ENCODE measurements at regions of chr5 and their contacts with region 1.

Region 1: DNA sequence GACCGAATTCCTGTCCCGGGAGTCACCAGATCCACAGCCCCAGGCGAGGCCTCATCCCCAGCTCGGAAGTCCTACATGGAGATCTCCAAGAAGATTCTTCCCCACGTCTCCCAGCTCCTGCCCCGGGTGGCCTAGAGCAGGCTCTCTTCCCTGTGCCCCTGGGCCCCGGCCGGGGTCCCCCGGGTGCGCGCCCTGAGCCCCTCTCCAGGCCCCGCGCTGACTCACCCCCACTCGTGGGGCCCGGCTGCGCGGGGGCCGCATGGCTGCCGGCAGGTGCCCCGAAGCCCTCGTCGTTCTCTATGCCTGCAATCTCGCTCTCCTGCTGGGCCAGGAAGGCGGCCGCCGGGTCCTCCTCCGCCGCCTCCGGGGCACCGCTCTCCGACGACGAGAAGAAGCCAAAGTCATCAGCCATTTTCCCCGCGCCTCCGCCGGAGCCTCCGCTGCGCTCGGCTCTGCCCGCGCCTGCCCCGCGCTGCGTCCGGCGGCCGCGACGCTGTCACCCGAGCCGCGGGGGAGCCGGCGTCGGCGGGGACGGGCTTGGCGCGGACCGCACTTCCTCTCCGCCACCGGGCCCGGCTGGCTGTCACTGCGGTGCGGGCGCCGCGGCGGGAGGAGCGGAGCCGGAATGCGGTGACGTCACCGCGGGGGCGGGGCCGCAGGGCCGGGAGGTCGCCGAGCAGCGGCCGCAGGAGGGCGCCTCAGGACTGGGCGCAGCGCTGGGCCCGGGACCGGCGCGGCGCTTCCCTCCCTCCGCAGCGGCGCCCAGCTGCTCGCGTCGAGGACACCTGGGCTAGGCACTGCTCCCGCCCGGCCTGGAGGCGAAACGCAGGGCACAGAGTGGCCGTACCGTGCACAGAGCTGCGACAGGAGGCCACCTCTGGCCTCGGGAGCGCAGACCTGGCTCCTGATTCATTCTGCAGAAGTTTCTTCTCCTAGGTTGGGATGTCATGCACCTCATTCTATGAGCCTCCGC is at the start of gene CLTB:
- DNase-seq: peak; percentile 88 to 97 (median 93)
- H3K4me3 ChIP-seq: peak within 1 kb of the TSS; percentile 100
- H3K27ac ChIP-seq: peak within 1 kb of the TSS; percentile 86 to 89
- H3K4me1 ChIP-seq: peaks cover 8% of the 10 kb centered on the region
- H3K27me3 ChIP-seq: no peaks in the 10 kb centered on the region
- CTCF ChIP-seq: peak; percentile 52 to 97 (median 94)
- EP300 ChIP-seq: no peak
- POLR2A ChIP-seq: peak; percentile 93
- total RNA-seq, gene CLTB: 79.7 to 138 (median 115) TPM

Region 2: DNA sequence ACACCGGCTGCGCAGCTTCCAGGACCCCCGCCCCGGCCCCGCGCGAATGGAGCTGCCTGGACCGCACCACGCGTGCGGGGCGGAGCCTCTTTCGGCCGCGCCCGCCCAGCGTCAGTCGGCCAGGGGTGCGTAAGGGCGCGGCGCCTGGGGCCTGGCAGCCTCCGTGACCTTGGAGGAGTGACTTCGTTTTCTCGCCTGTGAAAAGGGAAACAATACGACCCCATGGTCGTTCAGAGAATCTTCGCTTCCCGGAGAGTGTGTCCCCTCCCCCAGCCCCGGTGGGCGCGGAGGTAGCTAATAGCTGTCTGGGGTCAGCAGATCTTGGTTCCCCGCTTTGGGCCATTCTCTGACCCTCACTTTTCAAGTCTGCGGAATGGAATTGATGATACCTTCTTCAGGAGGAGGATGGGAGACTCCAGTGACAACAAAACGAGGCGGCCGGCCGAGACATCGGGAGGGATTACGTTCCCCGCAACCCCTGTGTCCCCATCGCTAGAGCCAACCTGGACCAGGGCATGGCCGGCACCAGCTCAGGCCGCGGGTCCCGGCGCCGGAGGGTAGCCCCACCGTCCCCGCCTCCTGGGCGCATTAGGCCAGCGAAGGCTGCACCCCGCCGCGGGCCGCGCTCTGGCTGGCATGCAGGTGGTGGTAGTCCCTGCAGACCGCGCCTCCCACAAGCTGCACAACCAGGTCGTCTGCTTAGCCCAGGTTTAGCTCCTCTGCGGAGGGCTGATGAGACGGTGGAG is 127.4 kb after region 1 on chr5:
- intact Hi-C with region 1: loop called in 1 of 4 experiments (anchors 10 kb)
- DNase-seq: peak; percentile 68 to 87 (median 79)
- H3K4me3 ChIP-seq: peak overlapping the region; percentile 79
- H3K27ac ChIP-seq: peak overlapping the region; percentile 72 to 88
- H3K4me1 ChIP-seq: peaks cover 7% of the 10 kb centered on the region
- H3K27me3 ChIP-seq: no peaks in the 10 kb centered on the region
- CTCF ChIP-seq: no peak
- EP300 ChIP-seq: no peak
- POLR2A ChIP-seq: peak; percentile 26

Region 3: GRCh38 chr5:176647030-176647866 is 231.0 kb after region 1 on chr5 and contains the start of gene TSPAN17:
- intact Hi-C with region 1: loop called in 1 of 4 experiments (anchors 5 kb)
- DNase-seq: peak; percentile 100
- H3K4me3 ChIP-seq: peak within 1 kb of the TSS; percentile 68
- H3K27ac ChIP-seq: peak within 1 kb of the TSS; percentile 44 to 73
- H3K4me1 ChIP-seq: peaks cover 9% of the 10 kb centered on the region
- H3K27me3 ChIP-seq: no peaks in the 10 kb centered on the region
- CTCF ChIP-seq: no peak
- EP300 ChIP-seq: no peak
- POLR2A ChIP-seq: peak; percentile 43
- total RNA-seq, gene TSPAN17: 7.5 to 19.3 (median 14.9) TPM